ENCODE measurements at regions of chr10 and their contacts with region 1.

Region 1: DNA sequence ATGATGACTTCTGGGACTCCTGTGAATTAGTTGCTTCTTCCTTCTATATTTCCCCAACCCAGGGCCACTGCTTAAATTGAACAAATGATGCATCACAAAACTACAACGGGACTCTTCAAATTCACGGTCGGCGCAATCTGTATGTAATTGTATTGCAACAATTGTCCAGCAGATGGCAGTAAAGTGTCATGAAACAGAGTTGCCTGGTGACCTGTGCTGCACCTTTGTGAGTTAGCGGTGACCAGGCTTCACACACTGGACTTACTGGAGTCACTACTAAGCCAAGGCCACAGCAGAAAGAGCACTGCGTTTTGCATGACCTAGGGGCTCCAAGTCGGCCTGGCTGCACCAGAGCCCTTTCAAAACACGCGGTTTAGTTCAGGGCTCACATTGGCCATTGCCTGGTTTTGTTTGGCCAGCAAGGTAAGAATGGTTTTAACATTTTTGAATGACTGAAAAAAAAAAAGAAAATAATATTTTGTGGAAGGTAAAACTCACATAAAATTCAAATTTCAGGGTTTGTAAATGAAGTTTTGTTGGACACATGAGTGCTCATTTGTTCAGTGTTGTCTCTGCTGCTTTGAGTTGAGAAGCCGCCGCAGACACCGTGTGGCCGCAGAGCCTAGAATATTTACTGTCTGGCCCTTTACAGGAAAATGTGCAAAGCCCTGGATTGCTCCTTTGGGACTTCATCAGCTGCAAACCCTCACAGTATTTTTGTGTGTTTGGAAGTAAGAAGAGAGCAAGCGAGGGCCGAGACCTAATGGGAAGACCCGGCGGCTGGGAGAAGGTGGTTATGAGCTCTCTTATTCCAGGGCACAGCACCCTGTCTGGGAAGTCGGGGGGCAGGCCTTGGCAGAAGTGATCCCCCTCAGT is 23.2 kb upstream of the ZNF32 start:
- DNase-seq: peak; percentile 69
- ATAC-seq: peak; percentile 94
- H3K4me3 ChIP-seq: no peak overlapping the region
- H3K27ac ChIP-seq: no peak overlapping the region
- H3K4me1 ChIP-seq: no peaks in the 10 kb centered on the region
- H3K27me3 ChIP-seq: peaks cover 0 to 4% of the 10 kb centered on the region in 2 experiments; a peak in 2 of 5 replicates
- CTCF ChIP-seq: peak; percentile 95
- EP300 ChIP-seq: no peak
- POLR2A ChIP-seq: no peak
- RAD21 ChIP-seq: peak; percentile 79

Region 2: GRCh38 chr10:44857363-44858016 is 1185.6 kb after region 1 on chr10:
- CTCF ChIA-PET with region 1: interaction called, 9 read pairs
- POLR2A ChIA-PET with region 1: no interaction called
- in situ Hi-C with region 1: loop called (anchors 5 kb)
- intact Hi-C with region 1: loop called (anchors 1 kb)
- DNase-seq: peak; percentile 18
- ATAC-seq: peak; percentile 84
- H3K4me3 ChIP-seq: no peak overlapping the region
- H3K27ac ChIP-seq: no peak overlapping the region
- H3K4me1 ChIP-seq: no peaks in the 10 kb centered on the region
- H3K27me3 ChIP-seq: peaks cover 1 to 9% of the 10 kb centered on the region in 2 experiments; a peak in 1 of 5 replicates
- CTCF ChIP-seq: peak; percentile 91
- EP300 ChIP-seq: no peak
- POLR2A ChIP-seq: no peak
- RAD21 ChIP-seq: peak; percentile 79

Region 3: DNA sequence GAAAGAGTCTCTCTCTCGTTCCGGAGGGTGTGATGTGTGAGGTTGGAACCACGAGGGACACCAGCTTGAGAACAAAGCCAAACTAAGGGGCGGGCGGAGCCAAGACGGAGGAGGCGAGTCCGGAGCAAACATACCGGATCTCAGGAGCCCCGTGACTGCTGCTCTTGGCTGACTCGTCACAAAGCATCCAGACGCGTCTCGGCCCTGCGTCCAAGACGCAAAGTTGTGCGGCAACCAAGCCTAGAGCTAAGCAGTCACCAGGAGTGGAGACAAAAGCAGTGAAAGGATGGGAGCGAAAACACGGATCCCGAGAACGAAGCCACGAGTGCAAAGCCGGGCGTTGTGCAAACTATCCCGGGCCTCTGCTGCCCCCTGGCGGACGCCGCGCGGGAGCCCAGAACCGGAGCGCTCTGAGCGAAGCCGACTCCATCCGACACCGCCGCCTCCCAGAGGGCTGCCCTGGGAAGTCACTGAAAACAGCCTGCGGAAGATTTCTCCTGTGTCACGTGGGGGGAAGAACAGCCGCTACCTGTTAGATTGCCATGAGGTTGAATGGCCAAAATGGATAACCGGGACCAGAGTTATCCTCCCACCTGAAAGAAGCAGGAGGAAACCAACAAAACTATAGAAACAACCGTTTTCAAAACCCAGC is 1192.9 kb after region 1 on chr10:
- CTCF ChIA-PET with region 1: interaction called, 19 read pairs
- POLR2A ChIA-PET with region 1: no interaction called
- in situ Hi-C with region 1: loop called (anchors 5 kb)
- intact Hi-C with region 1: loop called (anchors 2 kb)
- DNase-seq: peak; percentile 57
- ATAC-seq: peak; percentile 99
- H3K4me3 ChIP-seq: peak overlapping the region in 1 of 3 experiments; percentile 65; a peak in 2 of 6 replicates
- H3K27ac ChIP-seq: no peak overlapping the region
- H3K4me1 ChIP-seq: peaks cover 11% of the 10 kb centered on the region
- H3K27me3 ChIP-seq: peaks cover 1 to 27% of the 10 kb centered on the region in 2 experiments; a peak in 3 of 5 replicates
- CTCF ChIP-seq: peak; percentile 93
- EP300 ChIP-seq: no peak
- POLR2A ChIP-seq: no peak
- RAD21 ChIP-seq: peak; percentile 87